ENCODE measurements at regions of chr20 and their contacts with region 1.

Region 1: GRCh38 chr20:3888622-3889488 is at the start of gene PANK2:
- DNase-seq: peak; percentile 100
- ATAC-seq: peak; percentile 97 to 99 (median 98)
- H3K4me3 ChIP-seq: peak within 1 kb of the TSS; percentile 65 to 100 (median 94)
- H3K27ac ChIP-seq: peak within 1 kb of the TSS; percentile 91 to 99 (median 97)
- H3K4me1 ChIP-seq: peaks cover 6 to 49% (median 47%) of the 10 kb centered on the region in 9 donors
- H3K27me3 ChIP-seq: no peaks in the 10 kb centered on the region
- CTCF ChIP-seq: peak in 8 of 9 donors; percentile 30 to 63 (median 46)
- total RNA-seq, gene PANK2: 12.2 to 25.1 (median 17.2) TPM

Region 2: GRCh38 chr20:3980260-3981131 is 91.6 kb after region 1 on chr20:
- intact Hi-C with region 1: loop called in 1 of 10 experiments (anchors 10 kb)
- DNase-seq: no peak
- ATAC-seq: peak in 7 of 8 donors; percentile 56 to 76 (median 71)
- H3K4me3 ChIP-seq: peak overlapping the region in 9 of 10 donors; percentile 20 to 54 (median 44)
- H3K27ac ChIP-seq: peak overlapping the region in 9 of 10 donors; percentile 9 to 85 (median 48)
- H3K4me1 ChIP-seq: peaks cover 0 to 23% (median 6%) of the 10 kb centered on the region in 9 donors
- H3K27me3 ChIP-seq: no peaks in the 10 kb centered on the region
- CTCF ChIP-seq: no peak

Region 3: DNA sequence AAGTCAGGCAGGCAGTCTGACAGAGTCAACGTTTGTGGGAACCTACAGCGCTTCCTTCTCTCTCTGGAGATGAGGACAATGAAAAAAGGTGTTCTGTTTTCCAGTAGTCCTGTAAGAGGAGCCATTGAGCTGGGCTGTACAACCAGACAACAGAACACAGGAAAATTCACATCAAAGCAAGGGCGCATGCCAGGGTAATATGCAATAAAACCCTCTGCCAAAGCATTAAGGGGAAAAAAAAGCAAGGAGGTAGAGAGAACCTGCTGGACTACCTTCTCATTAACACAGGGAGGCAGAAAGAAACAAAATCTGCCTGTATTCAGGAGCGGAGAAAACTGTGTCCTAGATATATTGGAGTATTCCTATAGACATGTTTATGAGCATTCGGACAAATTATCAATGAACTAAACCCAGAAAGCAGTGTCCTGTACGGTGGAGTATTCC is 125.2 kb after region 1 on chr20:
- intact Hi-C with region 1: loop called in 4 of 10 experiments (anchors 5 kb)
- DNase-seq: peak in 1 of 2 donors; percentile 52
- ATAC-seq: peak in 7 of 8 donors; percentile 21 to 68 (median 57)
- H3K4me3 ChIP-seq: peak overlapping the region in 6 of 10 donors; percentile 82 to 94 (median 88)
- H3K27ac ChIP-seq: peak overlapping the region in 4 of 10 donors; percentile 10 to 94 (median 36)
- H3K4me1 ChIP-seq: peaks cover 0 to 75% (median 13%) of the 10 kb centered on the region in 9 donors
- H3K27me3 ChIP-seq: no peaks in the 10 kb centered on the region
- CTCF ChIP-seq: peak; percentile 17 to 76 (median 58)

Region 4: DNA sequence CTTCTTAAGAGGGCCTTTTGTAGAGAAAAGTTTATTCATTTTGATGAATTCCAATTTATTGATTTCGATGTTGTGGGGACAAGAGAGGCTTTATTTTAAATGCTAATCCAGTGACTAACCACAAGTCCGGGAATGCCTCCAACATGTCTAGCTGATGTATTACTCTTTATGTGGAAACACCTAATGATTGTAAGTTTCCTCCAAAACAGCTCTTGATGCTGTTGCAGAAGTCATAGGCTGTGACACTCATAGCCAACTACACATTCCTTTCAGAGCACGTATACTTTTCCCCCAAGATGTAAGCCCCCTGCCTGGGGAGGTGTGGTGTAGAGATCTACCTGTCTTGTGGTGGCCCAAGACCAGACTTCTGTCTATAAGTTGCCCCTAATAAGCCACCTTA is 187.8 kb after region 1 on chr20:
- intact Hi-C with region 1: loop called in 6 of 10 experiments (anchors 5 to 10 kb)
- DNase-seq: no peak
- ATAC-seq: no peak
- H3K4me3 ChIP-seq: no peak overlapping the region
- H3K27ac ChIP-seq: no peak overlapping the region
- H3K4me1 ChIP-seq: peaks cover 0 to 19% (median 0%) of the 10 kb centered on the region in 9 donors
- H3K27me3 ChIP-seq: no peaks in the 10 kb centered on the region
- CTCF ChIP-seq: no peak

Region 5: DNA sequence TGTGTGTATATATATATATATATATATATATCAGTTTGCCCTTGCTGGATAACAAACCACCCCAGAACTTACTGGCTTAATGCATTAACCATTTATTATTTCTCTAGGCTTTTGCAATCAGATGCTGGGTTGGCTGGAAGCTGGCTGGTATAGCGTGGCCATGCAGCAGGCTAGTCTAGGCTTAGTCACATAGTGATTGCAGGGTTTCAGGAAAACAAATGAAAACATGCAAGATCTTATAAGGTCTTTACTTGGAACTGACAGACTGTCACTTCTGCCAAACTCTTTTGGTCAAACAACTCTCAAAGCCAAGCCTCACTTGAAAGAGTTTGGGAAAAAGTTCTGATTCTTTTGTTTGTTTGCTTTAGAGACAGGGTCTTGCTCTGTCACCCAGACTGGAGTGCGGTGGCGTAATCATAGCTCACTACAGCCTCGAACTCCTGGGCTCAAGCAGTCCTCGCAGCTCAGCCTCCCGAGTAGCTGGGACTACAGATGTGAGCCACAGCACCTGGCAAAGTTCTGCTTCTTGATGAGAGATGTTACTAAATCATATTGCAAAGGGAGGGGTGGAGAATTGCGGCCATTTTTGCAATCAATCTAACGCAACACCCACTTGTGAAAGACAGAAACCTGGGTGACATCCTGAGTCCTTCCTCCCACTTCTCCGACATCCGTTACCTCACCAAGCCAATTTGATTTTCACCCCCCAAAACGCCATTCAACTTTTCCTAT is 201.1 kb after region 1 on chr20:
- intact Hi-C with region 1: loop called in 2 of 10 experiments (anchors 5 to 10 kb)
- DNase-seq: no peak
- ATAC-seq: no peak
- H3K4me3 ChIP-seq: no peak overlapping the region
- H3K27ac ChIP-seq: peak overlapping the region in 1 of 10 donors; percentile 73
- H3K4me1 ChIP-seq: peaks cover 0 to 40% (median 8%) of the 10 kb centered on the region in 9 donors
- H3K27me3 ChIP-seq: peaks cover 0 to 6% (median 0%) of the 10 kb centered on the region in 7 donors
- CTCF ChIP-seq: no peak

Measured in heart right ventricle (tissue), 16 donors.